Posterior cingulate gyrus (tissue), 11 donors: ENCODE measurements at regions of chr1 and their contacts with region 1.

Region 1: DNA sequence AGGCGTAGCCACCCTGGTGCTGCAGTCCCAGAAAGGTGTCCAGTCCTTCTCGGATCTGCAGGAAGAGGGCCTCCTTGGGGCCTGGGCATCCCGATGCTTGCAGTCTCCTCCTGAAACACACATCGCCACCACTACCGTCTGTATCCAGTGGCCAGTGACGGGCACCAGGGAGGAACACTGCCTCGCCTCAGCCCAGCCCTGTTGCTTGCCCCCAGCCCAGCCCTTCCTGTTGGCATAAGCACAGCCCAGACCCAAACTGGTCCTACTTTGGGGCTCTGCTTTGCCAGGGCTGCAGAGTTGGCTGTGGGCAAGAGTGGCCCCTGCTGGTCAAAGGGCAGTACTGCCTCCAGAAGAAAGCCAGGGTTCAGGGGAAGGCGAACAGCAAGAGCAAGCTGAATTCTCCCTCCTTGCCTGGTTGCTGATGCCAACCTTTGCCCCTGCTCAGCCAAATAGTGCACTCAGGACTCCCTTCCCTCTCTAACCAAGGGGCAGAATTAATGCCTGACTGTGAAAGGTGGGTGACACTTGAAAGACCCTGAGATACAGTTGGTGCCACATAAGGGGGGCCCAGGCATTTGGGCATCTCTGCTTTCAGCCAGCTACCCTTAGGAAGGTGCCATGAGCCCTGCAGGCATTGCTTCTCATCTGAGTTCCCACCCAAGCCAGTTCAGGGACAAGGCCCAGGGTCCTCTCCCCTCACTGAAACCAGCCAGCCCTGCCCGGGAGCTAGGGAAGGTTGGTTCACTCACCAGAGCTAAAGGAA is 11.1 kb upstream of the ARHGEF2 start:
- DNase-seq: peak; percentile 69 to 97 (median 82)

Region 2: GRCh38 chr1:155946633-155947219 is 42.7 kb before region 1 on chr1:
- intact Hi-C with region 1: no loop called
- DNase-seq: no peak

Region 3: DNA sequence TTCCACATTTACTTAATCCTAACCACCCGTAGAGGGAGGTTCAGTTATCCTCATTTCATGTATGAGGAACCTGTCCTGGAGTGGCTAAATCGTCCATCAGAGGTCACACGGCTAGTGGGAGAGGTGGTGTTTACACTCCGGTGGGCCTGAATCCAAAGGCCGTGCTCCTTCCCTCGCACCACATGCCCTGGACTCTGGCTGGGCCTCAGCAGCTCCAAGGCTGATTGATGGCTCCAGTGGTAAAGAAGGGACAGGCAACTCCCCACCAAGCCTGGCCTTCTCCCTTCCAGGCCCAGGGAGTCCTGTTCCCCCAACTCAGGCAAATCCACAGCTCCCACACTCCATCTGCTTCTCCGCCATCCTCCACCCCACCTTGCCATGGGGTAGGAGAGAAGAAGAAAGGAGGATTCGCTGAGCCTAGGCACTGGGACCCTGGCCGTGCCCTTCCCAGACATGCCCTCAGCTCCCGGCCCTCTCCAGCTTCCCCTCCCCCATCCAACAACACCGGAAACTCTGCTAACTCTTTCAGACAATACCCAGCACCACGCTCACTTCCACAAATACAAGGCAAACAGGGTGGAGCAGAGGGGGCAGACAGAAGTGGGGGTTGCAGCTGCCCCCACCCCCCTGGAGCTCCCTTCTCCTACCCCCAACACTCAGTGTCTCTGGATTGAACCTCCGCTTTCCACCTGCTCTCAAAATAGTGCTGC is 21.9 kb before region 1 on chr1:
- intact Hi-C with region 1: loop called (anchors 2 kb)
- DNase-seq: peak in 4 of 10 donors; percentile 29 to 89 (median 60)

Region 4: GRCh38 chr1:156591432-156592157 is 602.2 kb after region 1 on chr1 and contains the start of gene NAXE:
- intact Hi-C with region 1: no loop called
- DNase-seq: peak; percentile 66 to 97 (median 78)